ENCODE measurements at regions of chr2 and their contacts with region 1.

Region 1: GRCh38 chr2:172806493-172806892 is 70.8 kb downstream of the RAPGEF4 start:
- DNase-seq: peak; percentile 29
- H3K4me3 ChIP-seq: no peak overlapping the region
- H3K27ac ChIP-seq: no peak overlapping the region
- H3K27me3 ChIP-seq: no peaks in the 10 kb centered on the region
- CTCF ChIP-seq: peak; percentile 96

Region 2: GRCh38 chr2:172790404-172790803 is 16.1 kb before region 1 on chr2:
- CTCF ChIA-PET with region 1: interaction called, 32 read pairs
- POLR2A ChIA-PET with region 1: no interaction called
- DNase-seq: no peak
- H3K4me3 ChIP-seq: no peak overlapping the region
- H3K27ac ChIP-seq: no peak overlapping the region
- H3K27me3 ChIP-seq: no peaks in the 10 kb centered on the region
- CTCF ChIP-seq: no peak

Region 3: DNA sequence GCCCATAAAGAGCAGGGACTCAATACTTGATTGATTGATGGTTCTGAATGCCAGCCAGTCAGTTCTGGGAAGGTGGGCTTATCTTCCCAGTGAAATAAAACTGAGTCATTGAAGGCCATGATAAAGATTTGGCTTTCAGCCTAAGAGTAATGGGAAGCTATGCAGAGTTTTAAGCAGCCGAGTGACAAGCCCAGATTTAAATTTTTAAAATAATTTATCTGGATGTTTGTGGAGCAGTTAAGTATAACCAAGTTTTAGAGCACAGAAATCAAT is 51.9 kb after region 1 on chr2:
- CTCF ChIA-PET with region 1: interaction called, 13 read pairs
- POLR2A ChIA-PET with region 1: no interaction called
- DNase-seq: no peak
- H3K4me3 ChIP-seq: no peak overlapping the region
- H3K27ac ChIP-seq: no peak overlapping the region
- H3K27me3 ChIP-seq: no peaks in the 10 kb centered on the region
- CTCF ChIP-seq: no peak

Region 4: DNA sequence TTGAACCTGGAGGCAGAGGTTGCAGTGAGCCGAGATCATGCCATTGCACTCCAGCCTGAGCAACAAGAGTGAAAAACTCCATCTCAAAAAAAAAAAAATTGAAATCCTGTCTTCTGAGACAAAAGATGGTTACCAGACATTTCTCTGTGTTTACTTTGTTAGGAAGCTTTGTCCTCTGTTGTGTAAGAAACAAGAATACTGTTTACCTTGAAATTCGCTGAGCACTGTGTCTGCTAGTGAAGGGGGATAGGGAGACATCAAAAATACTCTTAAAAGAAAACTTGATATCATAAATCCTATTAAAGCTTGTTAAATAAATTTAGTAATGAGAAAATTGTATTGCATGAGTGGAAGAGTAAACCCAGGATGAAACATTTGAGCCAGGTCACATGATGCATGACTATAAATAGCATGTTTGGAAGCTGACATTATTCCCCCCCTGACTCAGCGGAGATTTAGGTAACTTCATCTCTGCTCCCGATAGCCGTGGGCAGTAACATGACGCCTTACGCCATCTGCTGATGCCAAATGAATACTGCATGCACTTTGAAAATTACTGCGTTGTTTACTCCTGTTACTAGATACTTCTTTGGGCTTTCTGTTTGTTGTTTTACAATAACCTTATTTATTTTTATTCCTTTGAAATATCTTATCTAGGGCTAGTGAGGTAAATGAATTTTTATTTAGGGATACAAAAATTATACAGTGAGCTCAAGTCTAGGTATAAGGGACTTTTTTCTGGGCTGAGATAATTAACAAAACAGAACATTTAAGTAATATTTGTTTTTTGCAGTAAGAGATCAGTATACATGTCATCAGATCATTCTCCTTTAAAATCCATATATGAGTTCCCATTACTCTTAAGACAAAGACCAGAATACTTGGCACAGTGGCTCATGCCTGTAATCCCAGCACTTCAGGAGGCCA is 404.0 kb after region 1 on chr2:
- CTCF ChIA-PET with region 1: interaction called, 12 read pairs
- POLR2A ChIA-PET with region 1: no interaction called
- DNase-seq: peak; percentile 91
- H3K4me3 ChIP-seq: no peak overlapping the region
- H3K27ac ChIP-seq: peak overlapping the region; percentile 54
- H3K27me3 ChIP-seq: no peaks in the 10 kb centered on the region
- CTCF ChIP-seq: peak; percentile 92

Region 5: GRCh38 chr2:173448938-173449471 is 642.5 kb after region 1 on chr2:
- CTCF ChIA-PET with region 1: interaction called, 13 read pairs
- POLR2A ChIA-PET with region 1: no interaction called
- DNase-seq: peak; percentile 42
- H3K4me3 ChIP-seq: peak overlapping the region; percentile 38
- H3K27ac ChIP-seq: no peak overlapping the region
- H3K27me3 ChIP-seq: peaks cover 19% of the 10 kb centered on the region
- CTCF ChIP-seq: peak; percentile 90

Measured in AG04450 (cell line).